Activated naive CD4-positive, alpha-beta T cell treated with anti-CD3 and anti-CD28 coated beads for 36 hours (primary cell): ENCODE measurements at regions of chrX and their contacts with region 1.

Region 1: DNA sequence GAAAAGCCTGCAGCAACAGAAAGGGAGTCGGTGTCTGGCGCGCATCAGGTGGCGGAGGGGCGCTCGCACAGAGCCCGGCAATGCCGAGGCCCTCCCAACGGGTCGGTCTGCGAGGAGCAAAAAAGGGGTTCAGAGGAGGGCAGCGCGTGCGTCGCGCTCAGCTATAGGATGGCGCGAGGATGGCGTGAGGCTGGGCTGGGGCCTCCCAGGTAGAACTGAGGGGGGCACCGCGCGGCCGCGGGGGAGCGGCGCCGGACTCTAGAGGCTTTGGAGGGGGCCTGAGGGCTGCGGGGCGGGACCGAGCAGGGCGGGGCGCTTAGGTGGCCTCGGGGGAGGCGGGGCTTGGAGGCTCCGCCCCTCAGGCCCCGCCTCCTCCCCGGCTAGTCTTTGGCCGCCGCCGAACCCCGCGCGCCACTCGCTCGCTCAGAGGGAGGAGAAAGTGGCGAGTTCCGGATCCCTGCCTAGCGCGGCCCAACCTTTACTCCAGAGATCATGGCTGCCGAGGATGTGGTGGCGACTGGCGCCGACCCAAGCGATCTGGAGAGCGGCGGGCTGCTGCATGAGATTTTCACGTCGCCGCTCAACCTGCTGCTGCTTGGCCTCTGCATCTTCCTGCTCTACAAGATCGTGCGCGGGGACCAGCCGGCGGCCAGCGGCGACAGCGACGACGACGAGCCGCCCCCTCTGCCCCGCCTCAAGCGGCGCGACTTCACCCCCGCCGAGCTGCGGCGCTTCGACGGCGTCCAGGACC is at the start of gene PGRMC1:
- DNase-seq: peak; percentile 81
- H3K4me3 Mint-ChIP-seq: peak within 1 kb of the TSS; percentile 86
- H3K27ac Mint-ChIP-seq: peak within 1 kb of the TSS; percentile 71
- H3K4me1 Mint-ChIP-seq: peaks cover 30% of the 10 kb centered on the region
- H3K27me3 Mint-ChIP-seq: no peaks in the 10 kb centered on the region
- total RNA-seq, gene PGRMC1: 26.3 to 27.0 TPM

Region 2: DNA sequence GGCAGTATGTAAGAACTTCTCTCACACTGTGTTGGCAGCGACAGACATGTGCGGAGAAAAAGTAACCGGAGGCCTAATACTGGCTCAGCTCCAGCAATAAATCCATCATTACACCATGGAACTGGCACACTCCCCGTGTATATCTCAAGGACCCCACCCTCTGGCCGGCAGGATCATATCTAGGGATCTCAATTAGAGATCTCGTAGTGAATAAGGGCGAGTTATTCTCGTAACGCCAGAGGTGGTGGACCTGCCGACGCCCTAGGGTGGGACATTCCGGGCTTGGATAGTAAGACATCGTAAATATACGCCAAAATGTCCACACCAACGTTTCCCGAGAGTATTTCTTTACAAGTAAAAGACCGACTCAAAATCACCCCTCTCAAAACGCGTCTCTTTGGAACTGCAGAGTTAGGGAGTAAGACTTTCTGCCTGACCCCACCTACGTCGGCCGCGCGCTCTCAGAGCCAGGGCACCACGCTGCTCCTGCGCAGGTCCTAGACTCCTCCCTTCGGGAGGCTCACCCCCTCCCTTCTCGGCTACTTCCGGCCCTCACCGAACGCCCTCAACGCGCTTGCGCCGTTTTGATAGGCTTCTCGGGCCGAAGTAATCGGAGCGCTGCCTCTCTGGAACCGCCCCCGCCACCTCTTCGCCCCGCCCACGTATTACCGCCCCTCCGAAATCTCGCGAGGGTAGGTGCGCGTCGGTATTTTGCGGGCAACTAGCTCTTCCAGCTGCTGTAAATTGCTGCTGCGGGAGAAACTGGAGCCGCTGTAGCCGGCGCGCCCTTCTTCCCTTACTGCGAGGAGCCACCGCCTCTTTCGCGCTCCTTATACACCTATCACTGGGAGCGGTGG is 890.4 kb before region 1 on chrX and contains the start of gene WDR44:
- CTCF ChIA-PET with region 1: no interaction called
- intact Hi-C with region 1: loop called (anchors 5 kb)
- DNase-seq: peak; percentile 94
- H3K4me3 Mint-ChIP-seq: peak within 1 kb of the TSS; percentile 97
- H3K27ac Mint-ChIP-seq: peak within 1 kb of the TSS; percentile 95
- H3K4me1 Mint-ChIP-seq: peaks cover 30% of the 10 kb centered on the region
- H3K27me3 Mint-ChIP-seq: no peaks in the 10 kb centered on the region
- total RNA-seq, gene WDR44: 4.0 to 5.4 TPM

Region 3: GRCh38 chrX:119015407-119016237 is 220.4 kb before region 1 on chrX:
- CTCF ChIA-PET with region 1: no interaction called
- intact Hi-C with region 1: loop called (anchors 1 kb)
- DNase-seq: peak; percentile 85
- H3K4me3 Mint-ChIP-seq: peak overlapping the region; percentile 14
- H3K27ac Mint-ChIP-seq: peak overlapping the region; percentile 13
- H3K4me1 Mint-ChIP-seq: peaks cover 24% of the 10 kb centered on the region
- H3K27me3 Mint-ChIP-seq: no peaks in the 10 kb centered on the region

Region 4: GRCh38 chrX:119574394-119575266 is 338.6 kb after region 1 on chrX and contains the start of gene UBE2A:
- CTCF ChIA-PET with region 1: no interaction called
- intact Hi-C with region 1: loop called (anchors 5 kb)
- DNase-seq: peak; percentile 89
- H3K4me3 Mint-ChIP-seq: peak within 1 kb of the TSS; percentile 91
- H3K27ac Mint-ChIP-seq: peak within 1 kb of the TSS; percentile 89
- H3K4me1 Mint-ChIP-seq: peaks cover 12% of the 10 kb centered on the region
- H3K27me3 Mint-ChIP-seq: no peaks in the 10 kb centered on the region
- total RNA-seq, gene UBE2A: 46.1 to 49.8 TPM

Region 5: DNA sequence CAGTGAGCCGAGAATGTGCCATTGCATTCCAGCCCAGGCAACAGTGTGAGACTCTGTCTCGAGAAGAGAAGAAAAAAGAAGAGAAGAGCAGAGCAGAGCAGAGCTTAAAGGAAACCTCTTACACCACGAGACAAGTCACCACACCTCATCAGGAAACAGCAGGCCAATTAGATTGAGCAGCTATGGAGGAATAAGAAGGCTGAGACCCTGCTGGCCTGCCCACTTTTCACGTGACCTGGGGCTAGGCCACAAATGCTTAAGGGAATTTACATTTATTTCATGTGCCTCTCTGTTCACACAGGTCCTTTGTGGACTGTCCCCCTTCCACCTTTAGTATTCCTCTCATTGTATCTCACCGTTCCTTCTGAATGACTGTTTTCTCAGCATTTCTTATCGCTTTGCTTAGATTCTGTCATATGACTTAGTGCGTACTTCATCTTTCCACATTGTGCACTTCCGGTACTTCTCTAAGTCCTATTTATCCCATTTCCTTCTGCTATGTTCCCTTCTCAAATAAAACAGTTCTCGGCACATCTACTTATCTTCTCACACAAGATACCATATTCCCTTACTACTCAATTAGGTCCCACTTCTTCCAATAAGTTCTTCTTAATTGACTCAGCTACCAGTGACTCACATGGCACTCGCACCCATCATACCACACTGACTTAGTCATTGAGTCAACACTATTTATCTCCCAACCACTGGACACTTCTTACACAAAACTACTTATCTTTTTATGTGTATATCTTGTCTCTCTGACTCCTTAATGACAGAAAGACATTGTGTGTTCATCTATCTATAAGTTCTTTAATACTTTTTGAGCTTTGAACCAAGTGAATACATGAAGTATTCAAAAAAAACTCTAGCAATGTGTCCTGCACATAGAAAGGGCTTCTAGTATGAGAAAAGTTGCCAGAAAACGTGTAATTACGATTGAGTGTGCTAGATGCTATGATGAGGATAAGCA is 1313.7 kb after region 1 on chrX:
- CTCF ChIA-PET with region 1: no interaction called
- intact Hi-C with region 1: loop called (anchors 10 kb)
- DNase-seq: peak; percentile 56
- H3K4me3 Mint-ChIP-seq: no peak overlapping the region
- H3K27ac Mint-ChIP-seq: peak overlapping the region; percentile 32
- H3K4me1 Mint-ChIP-seq: peaks cover 26% of the 10 kb centered on the region
- H3K27me3 Mint-ChIP-seq: no peaks in the 10 kb centered on the region